Activated CD8-positive, alpha-beta memory T cell treated with anti-CD3 and anti-CD28 coated beads, Interleukin-2, amount 10 ng/mL, durations not matched to agents 7 days and 5 days (primary cell): ENCODE measurements at regions of chr1 and their contacts with region 1.

Region 1: GRCh38 chr1:145906954-145907753 is 2.7 kb downstream of the ITGA10 start:
- DNase-seq: no peak
- ATAC-seq: no peak
- H3K4me3 Mint-ChIP-seq: no peak overlapping the region
- H3K27ac Mint-ChIP-seq: no peak overlapping the region
- H3K4me1 Mint-ChIP-seq: peaks cover 14% of the 10 kb centered on the region
- H3K27me3 Mint-ChIP-seq: no peaks in the 10 kb centered on the region

Region 2: DNA sequence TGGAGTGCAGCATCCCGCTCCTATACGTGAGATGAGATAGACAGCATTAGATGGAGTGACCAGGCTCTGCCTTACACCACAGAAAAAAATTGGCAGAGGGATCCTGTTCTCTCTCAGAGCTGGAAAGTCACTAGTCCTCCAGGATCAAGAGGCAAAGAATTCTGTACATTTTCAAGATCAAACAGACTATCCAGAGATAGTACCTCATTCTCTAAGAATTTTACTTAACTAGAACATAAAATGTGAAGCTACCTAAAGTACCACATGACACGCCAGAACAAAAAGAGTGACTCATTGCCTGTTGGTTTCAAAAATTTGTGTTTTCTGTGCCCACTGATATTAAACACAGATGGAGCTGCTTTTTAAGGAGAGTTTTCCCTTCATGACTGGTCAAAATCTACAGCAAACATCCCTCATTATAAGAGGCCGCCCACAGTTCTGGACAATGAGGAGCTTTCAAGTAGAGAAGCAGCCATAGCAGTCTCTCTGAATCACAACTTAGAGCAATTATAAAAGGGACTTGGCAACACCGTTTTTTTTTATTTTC is 155.6 kb before region 1 on chr1:
- CTCF ChIA-PET with region 1: no interaction called
- DNase-seq: no peak
- ATAC-seq: no peak
- H3K4me3 Mint-ChIP-seq: no peak overlapping the region
- H3K27ac Mint-ChIP-seq: no peak overlapping the region
- H3K4me1 Mint-ChIP-seq: no peaks in the 10 kb centered on the region
- H3K27me3 Mint-ChIP-seq: no peaks in the 10 kb centered on the region

Region 3: DNA sequence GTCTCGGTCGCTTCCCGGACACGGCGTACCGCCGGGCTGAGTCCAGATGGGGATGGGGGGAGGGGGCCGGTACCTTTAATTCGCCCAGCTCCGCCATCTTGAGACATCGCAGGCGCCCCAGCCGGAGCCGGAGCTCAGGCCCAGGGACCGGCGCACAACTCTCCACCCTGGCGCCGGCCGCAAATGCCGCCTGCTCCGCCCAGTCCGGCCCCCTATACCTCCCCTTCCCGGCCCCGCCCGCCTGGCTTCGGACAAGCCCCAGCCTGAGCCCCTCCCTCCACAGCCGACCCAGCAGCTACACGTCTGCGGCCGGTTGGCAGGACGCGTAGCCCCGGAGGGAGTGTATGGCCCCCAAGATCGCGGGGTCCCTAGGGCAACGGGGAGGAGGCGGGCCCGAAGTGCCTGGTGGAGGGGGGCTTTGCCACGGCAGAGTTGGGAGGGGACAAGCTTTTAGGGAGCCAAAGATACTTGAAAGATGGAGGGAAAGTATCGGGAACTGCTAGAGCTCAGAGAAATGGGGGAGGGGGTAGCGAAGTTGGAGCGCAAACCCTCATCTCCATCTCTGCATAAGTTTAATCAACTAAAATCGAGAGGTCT is 48.2 kb before region 1 on chr1 and contains the start of gene PIAS3:
- CTCF ChIA-PET with region 1: interaction called, 24 read pairs
- DNase-seq: peak; percentile 94
- ATAC-seq: peak; percentile 87
- H3K4me3 Mint-ChIP-seq: peak within 1 kb of the TSS; percentile 95
- H3K27ac Mint-ChIP-seq: peak within 1 kb of the TSS; percentile 87
- H3K4me1 Mint-ChIP-seq: peaks cover 10% of the 10 kb centered on the region
- H3K27me3 Mint-ChIP-seq: peaks cover 8% of the 10 kb centered on the region
- total RNA-seq, gene PIAS3: 20.3 to 23.6 TPM

Region 4: DNA sequence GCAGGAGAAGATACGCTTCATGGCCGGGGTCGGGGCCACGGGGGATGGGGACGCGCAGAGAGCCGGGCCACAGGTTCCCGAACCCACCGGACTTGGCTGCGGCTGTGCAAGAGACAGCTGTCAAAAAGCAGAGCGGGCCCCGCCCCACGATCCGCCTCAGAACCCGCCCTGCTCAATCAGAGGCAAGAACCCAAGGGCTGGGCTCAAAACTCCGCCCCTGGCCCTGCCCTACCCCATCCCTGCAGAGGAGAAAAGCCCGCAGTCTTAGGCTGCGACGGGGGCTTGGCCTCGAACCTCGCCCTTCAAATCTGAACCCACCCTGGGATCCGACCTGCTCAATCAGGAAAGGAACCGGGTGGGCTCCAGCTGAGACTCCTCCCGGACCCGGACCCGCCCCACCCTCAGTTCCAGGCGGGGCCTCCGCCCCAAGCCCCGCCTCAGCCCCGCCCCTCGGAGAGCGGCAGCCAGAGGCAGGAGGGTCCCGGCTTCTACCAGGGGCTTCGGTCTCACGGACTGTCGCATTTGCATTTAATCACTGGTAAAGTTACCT is 21.3 kb before region 1 on chr1 and contains the start of gene ANKRD35:
- CTCF ChIA-PET with region 1: interaction called, 25 read pairs
- DNase-seq: peak; percentile 94
- ATAC-seq: peak; percentile 100
- H3K4me3 Mint-ChIP-seq: peak within 1 kb of the TSS; percentile 74
- H3K27ac Mint-ChIP-seq: peak within 1 kb of the TSS; percentile 19
- H3K4me1 Mint-ChIP-seq: peaks cover 16% of the 10 kb centered on the region
- H3K27me3 Mint-ChIP-seq: peaks cover 34% of the 10 kb centered on the region
- total RNA-seq, gene ANKRD35: 1.1 to 1.4 TPM

Region 5: DNA sequence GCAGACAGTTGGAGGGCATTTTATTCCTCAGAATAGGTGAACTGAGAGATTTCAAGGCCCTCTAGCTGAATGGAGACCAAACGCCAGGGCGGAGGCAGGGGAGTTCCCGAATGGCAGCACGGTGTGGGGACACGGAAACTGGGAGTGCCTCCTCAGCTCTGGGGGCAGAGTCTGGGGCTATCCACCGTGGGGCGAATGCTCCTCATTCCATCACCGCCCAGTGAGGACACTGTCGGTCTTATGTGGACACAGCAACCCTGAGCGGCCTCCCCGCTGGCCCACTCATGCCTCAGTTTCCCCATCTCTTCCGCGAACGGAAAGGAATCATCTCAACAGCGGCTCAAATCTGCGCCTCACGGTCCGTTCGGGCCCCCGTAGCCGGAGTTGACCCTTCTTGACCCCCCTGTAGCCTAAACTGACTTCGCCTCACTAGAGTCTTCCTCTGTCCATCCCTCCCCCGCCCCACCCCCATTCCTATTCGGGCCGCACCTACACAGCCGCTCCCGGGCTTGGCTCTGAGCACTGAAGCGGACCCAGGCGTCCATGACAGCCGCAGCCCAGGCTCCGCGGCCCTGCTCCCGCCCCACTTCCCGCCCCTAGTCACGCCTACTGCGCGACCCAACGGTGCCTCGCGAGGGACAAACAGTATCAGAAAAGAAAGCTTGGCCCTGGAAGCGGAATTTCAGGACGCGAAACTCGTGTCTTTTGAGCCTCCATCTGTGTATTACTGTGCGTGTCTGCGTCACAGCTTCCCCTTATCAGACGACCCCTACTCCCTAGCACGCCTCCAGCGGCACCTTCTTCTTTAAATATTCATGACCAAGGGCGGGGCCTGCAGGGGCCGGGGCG is 11.2 kb after region 1 on chr1 and contains the start of gene PEX11B:
- CTCF ChIA-PET with region 1: interaction called, 22 read pairs
- DNase-seq: peak; percentile 94
- ATAC-seq: peak; percentile 93
- H3K4me3 Mint-ChIP-seq: peak within 1 kb of the TSS; percentile 91
- H3K27ac Mint-ChIP-seq: peak within 1 kb of the TSS; percentile 95
- H3K4me1 Mint-ChIP-seq: peaks cover 42% of the 10 kb centered on the region
- H3K27me3 Mint-ChIP-seq: no peaks in the 10 kb centered on the region
- total RNA-seq, gene PEX11B: 27.3 to 36.2 TPM